ENCODE measurements at regions of chr7 and their contacts with region 1.

Region 1: DNA sequence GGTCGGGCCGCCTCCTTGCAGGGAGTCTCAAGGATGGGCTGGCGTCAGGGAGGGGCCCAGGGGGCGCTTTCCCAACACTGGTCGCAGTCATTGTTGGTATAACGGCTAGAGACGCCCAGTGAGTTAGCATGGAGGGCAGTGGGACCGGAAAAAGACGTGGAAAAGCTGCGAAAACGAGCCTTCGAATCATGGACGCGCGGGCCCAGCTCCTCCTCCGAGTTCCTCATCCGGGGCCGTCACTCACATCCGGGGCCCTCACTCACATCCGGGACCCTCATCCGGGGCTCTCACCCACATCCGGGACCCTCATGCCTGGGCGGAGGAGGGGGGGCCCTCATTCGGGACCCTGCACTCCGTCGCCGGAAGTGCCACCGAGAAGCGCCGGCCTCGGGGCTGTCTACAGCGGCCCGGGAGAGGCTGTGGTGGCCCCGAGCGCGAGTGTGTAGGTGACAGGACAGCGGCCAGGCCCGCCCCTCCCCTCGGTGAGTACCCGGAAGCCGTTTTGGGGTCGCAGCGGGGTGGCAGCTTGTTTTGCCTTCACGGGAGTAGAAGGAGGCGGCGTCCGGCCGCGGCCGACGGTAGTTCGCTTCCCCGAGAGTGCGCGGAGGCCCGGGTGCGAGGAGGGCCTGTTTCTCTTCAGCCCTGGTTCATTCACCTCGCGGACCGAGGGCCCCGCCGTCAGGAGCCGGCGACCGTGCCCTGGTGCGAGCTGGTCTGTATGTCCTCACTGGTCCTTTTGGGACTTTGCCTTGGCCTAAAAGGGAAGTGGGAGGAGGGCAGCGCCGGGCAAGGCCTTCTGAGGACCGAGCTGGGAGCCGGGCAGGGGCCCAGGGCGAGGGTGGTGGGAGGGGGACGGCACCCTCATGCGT is at the start of gene ZNF655:
- DNase-seq: peak; percentile 97 to 99 (median 98)
- ATAC-seq: peak; percentile 92
- H3K4me3 ChIP-seq: peak within 1 kb of the TSS; percentile 88
- H3K27ac ChIP-seq: peak within 1 kb of the TSS; percentile 95
- H3K4me1 ChIP-seq: peaks cover 16 to 23% of the 10 kb centered on the region in 2 experiments
- H3K27me3 ChIP-seq: no peaks in the 10 kb centered on the region
- CTCF ChIP-seq: 0 out of 6 replicates have a peak, but pooled peaks of 1 of the 3 experiments have one; percentile 20
- EP300 ChIP-seq: peak; percentile 25; the same call in 1 of the 2 replicates
- POLR2A ChIP-seq: peak; percentile 97
- RAD21 ChIP-seq: no peak; a peak in 1 of 4 replicates
- polyA plus RNA-seq, gene ZNF655: 25.7 to 34.1 TPM

Region 2: DNA sequence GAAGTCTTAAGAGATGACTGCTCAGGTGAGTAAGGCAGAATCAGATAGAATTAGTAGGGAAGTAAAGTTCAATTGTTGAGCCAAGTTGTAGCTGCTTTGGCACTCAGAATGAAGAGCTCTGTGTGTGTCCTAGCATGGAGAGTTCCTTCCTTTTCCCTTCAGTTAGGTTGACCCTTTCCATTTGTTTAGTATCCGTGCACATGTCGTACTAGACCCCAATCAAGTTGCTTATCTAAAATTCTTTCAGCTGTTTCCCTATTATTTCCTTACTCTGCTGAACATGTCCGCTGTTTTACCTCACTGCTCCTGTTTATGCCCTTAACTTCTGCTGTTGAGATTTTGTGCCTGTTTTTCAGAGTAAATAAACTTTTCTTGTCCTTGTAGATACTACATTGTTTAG is 13.2 kb after region 1 on chr7:
- CTCF ChIA-PET with region 1: no interaction called
- POLR2A ChIA-PET with region 1: interaction called, 21 read pairs
- in situ Hi-C with region 1: no loop called
- intact Hi-C with region 1: no loop called
- DNase-seq: no peak
- ATAC-seq: no peak
- H3K4me3 ChIP-seq: no peak overlapping the region
- H3K27ac ChIP-seq: no peak overlapping the region
- H3K4me1 ChIP-seq: no peaks in the 10 kb centered on the region
- H3K27me3 ChIP-seq: no peaks in the 10 kb centered on the region
- CTCF ChIP-seq: no peak
- EP300 ChIP-seq: no peak
- POLR2A ChIP-seq: no peak
- RAD21 ChIP-seq: no peak